K562 (cell line): ENCODE measurements at regions of chr9 and their contacts with region 1.

Region 1: GRCh38 chr9:32251539-32251938 is 132.9 kb upstream of the ACO1 start:
- DNase-seq: peak in 2 of 4 experiments; percentile 14 to 54
- ATAC-seq: peak; percentile 84
- H3K4me3 ChIP-seq: no peak overlapping the region
- H3K27ac ChIP-seq: no peak overlapping the region
- H3K4me1 ChIP-seq: no peaks in the 10 kb centered on the region
- H3K27me3 ChIP-seq: no peaks in the 10 kb centered on the region
- CTCF ChIP-seq: peak; percentile 26 to 52 (median 52); a peak in 4 of 6 replicates
- EP300 ChIP-seq: no peak
- POLR2A ChIP-seq: no peak
- RAD21 ChIP-seq: peak; percentile 36 to 57

Region 2: DNA sequence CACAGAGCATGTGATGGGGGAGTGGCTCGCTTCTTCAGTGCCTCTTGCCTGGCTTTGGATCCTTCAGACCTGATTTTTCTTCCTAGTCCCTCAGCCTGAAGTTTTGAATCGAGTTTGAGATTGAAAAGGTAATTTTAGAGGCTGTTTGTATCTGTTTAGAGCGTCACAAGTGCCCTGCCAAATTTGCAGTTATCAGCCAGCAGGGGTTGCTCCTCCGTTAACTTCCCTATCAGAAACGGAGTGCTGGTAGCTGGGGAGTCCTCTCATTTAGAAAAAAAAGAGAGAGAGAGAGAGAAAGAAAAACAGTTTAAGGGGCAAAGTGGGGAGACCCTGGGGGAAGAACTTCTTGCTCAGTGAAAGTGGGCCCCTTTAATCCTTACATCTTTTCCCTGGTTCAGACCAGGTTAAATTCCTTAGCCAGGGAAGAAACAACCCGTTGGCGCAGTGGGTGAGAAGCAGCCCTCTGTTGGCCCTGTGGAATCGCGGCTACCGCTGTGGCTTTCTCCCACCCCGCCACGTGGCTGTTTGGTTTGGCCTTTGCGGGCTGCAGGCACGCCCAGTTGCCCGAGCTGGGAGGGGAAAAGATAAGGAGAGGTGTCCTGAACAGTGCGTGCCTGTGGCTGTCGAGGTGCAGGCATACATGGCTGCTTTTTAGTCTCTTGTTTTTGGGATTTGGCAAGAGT is 443.8 kb before region 1 on chr9:
- CTCF ChIA-PET with region 1: no interaction called
- POLR2A ChIA-PET with region 1: no interaction called
- in situ Hi-C with region 1: no loop called
- intact Hi-C with region 1: loop called (anchors 5 kb)
- DNase-seq: peak; percentile 1 to 57 (median 8)
- ATAC-seq: peak; percentile 82
- H3K4me3 ChIP-seq: no peak overlapping the region
- H3K27ac ChIP-seq: no peak overlapping the region
- H3K4me1 ChIP-seq: 0 out of 5 replicates have a peak, but pooled peaks cover 0 to 5% of the 10 kb centered on the region in 2 experiments
- H3K27me3 ChIP-seq: 0 out of 5 replicates have a peak, but pooled peaks cover 0 to 4% of the 10 kb centered on the region in 2 experiments
- CTCF ChIP-seq: peak in 2 of 3 experiments; percentile 10 to 30; a peak in 1 of 6 replicates
- EP300 ChIP-seq: no peak
- POLR2A ChIP-seq: no peak
- RAD21 ChIP-seq: 0 out of 4 replicates have a peak, but pooled peaks have one; percentile 13 to 18

Region 3: GRCh38 chr9:32045513-32045912 is 206.0 kb before region 1 on chr9:
- CTCF ChIA-PET with region 1: no interaction called
- POLR2A ChIA-PET with region 1: no interaction called
- in situ Hi-C with region 1: no loop called
- intact Hi-C with region 1: no loop called
- DNase-seq: no peak
- ATAC-seq: no peak
- H3K4me3 ChIP-seq: no peak overlapping the region
- H3K27ac ChIP-seq: no peak overlapping the region
- H3K4me1 ChIP-seq: no peaks in the 10 kb centered on the region
- H3K27me3 ChIP-seq: no peaks in the 10 kb centered on the region
- CTCF ChIP-seq: no peak
- EP300 ChIP-seq: no peak
- POLR2A ChIP-seq: no peak
- RAD21 ChIP-seq: no peak